ENCODE measurements at regions of chr12 and their contacts with region 1.

Region 1: GRCh38 chr12:56359851-56360767 is at the start of gene STAT2:
- DNase-seq: peak; percentile 100
- H3K4me3 ChIP-seq: peak within 1 kb of the TSS; percentile 71 to 86 (median 80)
- H3K27ac ChIP-seq: peak within 1 kb of the TSS; percentile 91 to 94 (median 92)
- H3K4me1 ChIP-seq: peaks cover 13 to 32% (median 28%) of the 10 kb centered on the region in 4 donors
- H3K27me3 ChIP-seq: no peaks in the 10 kb centered on the region
- CTCF ChIP-seq: peak in 1 of 3 experiments; percentile 13
- EP300 ChIP-seq: no peak
- POLR2A ChIP-seq: peak; percentile 66
- total RNA-seq, gene STAT2: 55.7 to 78.9 (median 68.2) TPM

Region 2: GRCh38 chr12:56299853-56300643 is 60.1 kb before region 1 on chr12 and contains the start of gene CS:
- intact Hi-C with region 1: no loop called
- DNase-seq: peak; percentile 100
- H3K4me3 ChIP-seq: peak within 1 kb of the TSS; percentile 84 to 93 (median 85)
- H3K27ac ChIP-seq: peak within 1 kb of the TSS; percentile 90 to 98 (median 96)
- H3K4me1 ChIP-seq: peaks cover 54 to 72% (median 66%) of the 10 kb centered on the region in 4 donors
- H3K27me3 ChIP-seq: no peaks in the 10 kb centered on the region
- CTCF ChIP-seq: no peak
- EP300 ChIP-seq: no peak
- POLR2A ChIP-seq: peak; percentile 69
- total RNA-seq, gene CS: 91.8 to 155 (median 111) TPM

Region 3: DNA sequence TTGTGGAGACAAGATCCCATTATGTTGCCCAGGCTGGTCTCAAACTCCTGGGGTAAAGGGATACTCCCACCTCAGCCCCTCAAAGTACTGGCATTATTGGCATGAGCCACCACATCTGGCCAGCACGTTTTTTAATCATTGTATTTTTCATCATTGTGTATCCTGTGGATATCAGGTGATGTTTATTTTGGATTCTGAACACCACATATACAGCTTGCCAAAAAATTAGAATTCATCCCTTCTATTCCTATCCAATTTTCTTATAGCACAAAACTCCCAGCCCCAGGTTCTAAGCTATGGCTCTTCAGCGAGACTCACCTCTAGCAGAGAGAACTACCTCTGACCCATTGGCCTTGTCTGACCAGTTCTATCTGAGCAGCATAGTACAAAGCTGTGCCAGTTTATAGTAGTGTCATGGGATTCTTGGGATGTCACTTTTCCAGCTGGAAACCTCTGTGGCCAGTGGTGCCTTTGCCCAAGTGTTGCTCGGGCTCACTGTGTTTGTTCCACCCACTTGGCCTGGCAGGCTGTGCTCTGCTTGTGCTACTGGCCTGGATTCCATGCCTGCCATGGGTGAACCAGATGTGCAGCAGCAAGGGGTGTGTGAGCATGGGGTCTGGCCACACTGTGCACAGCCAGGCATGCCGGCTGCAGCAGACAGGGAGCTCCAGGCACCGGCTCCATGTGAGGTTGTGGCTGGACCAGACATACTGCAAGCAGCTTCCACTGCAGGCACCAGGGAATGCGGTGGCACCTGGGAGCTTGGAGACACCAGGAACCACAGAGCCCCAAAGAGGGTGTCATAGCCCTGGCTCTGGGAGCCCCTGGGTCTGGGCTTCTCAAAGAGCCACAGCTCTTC is 51.9 kb after region 1 on chr12:
- intact Hi-C with region 1: no loop called
- DNase-seq: no peak
- H3K4me3 ChIP-seq: no peak overlapping the region
- H3K27ac ChIP-seq: no peak overlapping the region
- H3K4me1 ChIP-seq: no peaks in the 10 kb centered on the region
- H3K27me3 ChIP-seq: no peaks in the 10 kb centered on the region
- CTCF ChIP-seq: no peak
- EP300 ChIP-seq: no peak
- POLR2A ChIP-seq: no peak

Region 4: GRCh38 chr12:56461235-56462159 is 101.4 kb after region 1 on chr12:
- intact Hi-C with region 1: loop called (anchors 5 kb)
- DNase-seq: no peak
- H3K4me3 ChIP-seq: no peak overlapping the region
- H3K27ac ChIP-seq: no peak overlapping the region
- H3K4me1 ChIP-seq: peaks cover 0 to 8% (median 4%) of the 10 kb centered on the region in 4 donors
- H3K27me3 ChIP-seq: no peaks in the 10 kb centered on the region
- CTCF ChIP-seq: no peak
- EP300 ChIP-seq: no peak
- POLR2A ChIP-seq: no peak